Left ventricle myocardium inferior (tissue), 1 donor: ENCODE measurements at regions of chr18 and their contacts with region 1.

Region 1: GRCh38 chr18:61743775-61744531 is 148.9 kb downstream of the RNF152 start:
- DNase-seq: peak; percentile 49
- H3K4me3 ChIP-seq: no peak overlapping the region
- H3K27ac ChIP-seq: peak overlapping the region; percentile 85
- H3K4me1 ChIP-seq: peaks cover 76% of the 10 kb centered on the region
- H3K27me3 ChIP-seq: no peaks in the 10 kb centered on the region
- CTCF ChIP-seq: no peak

Region 2: DNA sequence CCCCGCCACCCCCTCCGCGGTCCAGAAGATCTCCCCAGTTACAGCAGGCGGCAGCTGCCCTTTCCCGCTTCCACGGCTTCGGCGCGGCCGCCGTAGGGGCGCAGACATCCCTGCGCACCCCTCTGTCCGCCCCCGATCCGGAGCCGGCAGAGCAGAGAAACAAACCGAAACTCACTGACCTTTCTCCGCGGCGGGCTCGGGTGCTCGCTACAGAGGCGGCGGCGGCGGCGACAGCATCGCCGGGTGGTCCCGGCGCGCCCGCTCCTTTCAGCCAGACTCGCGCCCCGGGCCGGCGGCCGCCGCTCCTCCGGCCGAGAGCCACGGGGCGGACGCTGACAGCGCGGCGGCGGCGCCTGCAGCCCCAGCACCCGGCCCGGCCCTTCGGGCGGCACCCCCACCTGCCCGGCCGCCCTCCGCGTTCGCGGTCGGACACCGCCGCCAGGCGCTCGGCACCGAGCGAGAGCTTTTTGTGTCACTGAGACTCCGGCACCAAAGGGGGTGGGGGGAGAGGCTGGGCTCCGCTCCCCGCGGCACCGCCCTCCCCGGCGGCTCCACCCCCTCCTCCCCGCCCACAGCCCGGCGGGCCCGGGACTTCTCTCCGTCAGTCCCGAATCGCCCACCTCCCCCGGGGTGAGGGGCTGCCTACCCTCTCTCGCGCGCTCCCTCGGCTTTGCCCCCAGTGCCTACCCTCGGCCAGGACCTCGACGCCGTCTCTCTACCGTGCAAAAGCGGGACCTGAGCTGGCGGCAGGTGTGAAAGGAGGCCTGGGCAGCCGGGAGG is 150.2 kb after region 1 on chr18:
- intact Hi-C with region 1: loop called (anchors 10 kb)
- DNase-seq: peak; percentile 81
- H3K4me3 ChIP-seq: peak overlapping the region; percentile 88
- H3K27ac ChIP-seq: peak overlapping the region; percentile 92
- H3K4me1 ChIP-seq: peaks cover 59% of the 10 kb centered on the region
- H3K27me3 ChIP-seq: no peaks in the 10 kb centered on the region
- CTCF ChIP-seq: peak; percentile 64